Kidney (tissue), 22 donors: ENCODE measurements at regions of chr12 and their contacts with region 1.

Region 1: GRCh38 chr12:133058203-133059125 is 21.2 kb downstream of the ZNF84 start:
- DNase-seq: no peak
- H3K4me3 ChIP-seq: peak overlapping the region; percentile 22 to 40 (median 35)
- H3K27ac ChIP-seq: no peak overlapping the region
- H3K4me1 ChIP-seq: no peaks in the 10 kb centered on the region
- H3K27me3 ChIP-seq: no peaks in the 10 kb centered on the region
- CTCF ChIP-seq: no peak

Region 2: DNA sequence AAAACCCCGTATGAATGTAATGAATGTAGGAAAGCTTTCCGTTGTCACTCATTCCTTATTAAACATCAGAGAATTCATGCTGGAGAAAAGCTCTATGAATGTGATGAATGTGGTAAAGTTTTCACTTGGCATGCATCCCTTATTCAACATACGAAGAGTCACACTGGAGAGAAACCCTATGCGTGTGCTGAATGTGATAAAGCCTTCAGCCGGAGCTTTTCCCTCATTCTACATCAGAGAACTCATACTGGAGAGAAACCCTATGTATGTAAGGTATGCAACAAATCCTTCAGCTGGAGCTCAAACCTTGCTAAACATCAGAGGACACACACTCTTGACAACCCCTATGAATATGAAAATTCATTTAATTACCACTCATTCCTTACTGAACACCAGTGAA is 47.8 kb after region 1 on chr12:
- intact Hi-C with region 1: loop called (anchors 5 kb)
- DNase-seq: no peak
- H3K4me3 ChIP-seq: peak overlapping the region in 2 of 3 donors; percentile 0 to 31
- H3K27ac ChIP-seq: no peak overlapping the region
- H3K4me1 ChIP-seq: no peaks in the 10 kb centered on the region
- H3K27me3 ChIP-seq: no peaks in the 10 kb centered on the region
- CTCF ChIP-seq: no peak

Region 3: GRCh38 chr12:133235401-133236112 is 177.1 kb after region 1 on chr12 and contains the start of gene ANHX:
- intact Hi-C with region 1: no loop called
- DNase-seq: peak in 1 of 5 donors; percentile 45
- H3K4me3 ChIP-seq: no peak within 1 kb of the TSS
- H3K27ac ChIP-seq: no peak within 1 kb of the TSS
- H3K4me1 ChIP-seq: no peaks in the 10 kb centered on the region
- H3K27me3 ChIP-seq: no peaks in the 10 kb centered on the region
- CTCF ChIP-seq: no peak
- total RNA-seq, gene ANHX: not detected